Body of pancreas (tissue), 4 donors: ENCODE measurements at regions of chrX and their contacts with region 1.

Region 1: GRCh38 chrX:10119399-10119990 is 37.3 kb upstream of the CLCN4 start:
- DNase-seq: peak; percentile 80 to 91 (median 86)
- ATAC-seq: peak; percentile 92
- H3K4me3 ChIP-seq: no peak overlapping the region
- H3K27ac ChIP-seq: peak overlapping the region in 1 of 4 donors; percentile 37
- H3K4me1 ChIP-seq: no peaks in the 10 kb centered on the region
- H3K27me3 ChIP-seq: no peaks in the 10 kb centered on the region
- CTCF ChIP-seq: peak; percentile 99 to 100 (median 100)
- POLR2A ChIP-seq: no peak

Region 2: GRCh38 chrX:9995855-9996339 is 123.6 kb before region 1 on chrX:
- intact Hi-C with region 1: loop called (anchors 5 kb)
- DNase-seq: peak; percentile 84 to 88 (median 85)
- ATAC-seq: peak; percentile 90
- H3K4me3 ChIP-seq: no peak overlapping the region
- H3K27ac ChIP-seq: no peak overlapping the region
- H3K4me1 ChIP-seq: no peaks in the 10 kb centered on the region
- H3K27me3 ChIP-seq: no peaks in the 10 kb centered on the region
- CTCF ChIP-seq: peak; percentile 81 to 98 (median 97)
- POLR2A ChIP-seq: no peak

Region 3: GRCh38 chrX:10014462-10015356 is 104.8 kb before region 1 on chrX:
- intact Hi-C with region 1: loop called (anchors 5 kb)
- DNase-seq: peak; percentile 84 to 89 (median 88)
- ATAC-seq: peak; percentile 94
- H3K4me3 ChIP-seq: peak overlapping the region; percentile 7 to 27
- H3K27ac ChIP-seq: peak overlapping the region; percentile 73 to 88 (median 78)
- H3K4me1 ChIP-seq: no peaks in the 10 kb centered on the region
- H3K27me3 ChIP-seq: no peaks in the 10 kb centered on the region
- CTCF ChIP-seq: no peak
- POLR2A ChIP-seq: peak; percentile 12 to 47 (median 47)